AG04450 (cell line): ENCODE measurements at regions of chr3 and their contacts with region 1.

Region 1: DNA sequence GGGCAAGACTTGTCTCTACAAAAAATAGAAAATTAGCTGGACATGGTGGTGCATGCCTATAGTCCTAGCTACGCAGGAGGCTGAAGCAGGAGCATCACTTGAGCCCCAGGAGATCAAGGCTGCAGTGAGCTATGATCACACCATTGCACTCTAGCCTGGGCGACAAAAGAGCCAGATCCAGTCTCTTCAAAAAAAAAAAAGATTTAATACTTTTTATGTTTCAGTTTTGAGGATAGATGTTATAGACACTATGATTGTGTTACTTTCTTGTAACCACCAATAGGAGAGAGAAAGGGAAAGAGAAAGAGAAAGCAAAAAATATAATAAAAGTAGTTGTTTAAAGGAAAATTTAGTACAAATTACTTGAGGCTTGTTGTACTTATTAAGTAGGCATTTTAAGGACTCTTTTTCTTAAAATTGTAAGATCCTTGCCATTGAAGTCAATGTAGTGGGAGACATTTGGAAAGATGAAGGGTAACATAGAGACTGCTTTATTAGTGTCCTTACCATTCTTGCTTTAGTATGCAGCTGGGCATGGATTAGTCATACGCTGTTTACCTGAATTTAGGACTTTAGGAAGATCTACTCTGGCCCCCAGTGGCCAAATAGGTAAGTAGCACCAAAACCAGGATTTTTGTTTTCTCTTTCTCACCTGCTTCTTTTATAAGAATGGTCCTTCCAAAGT is 35.1 kb upstream of the ZDHHC23 start:
- DNase-seq: peak; percentile 32
- H3K4me3 ChIP-seq: no peak overlapping the region
- H3K27ac ChIP-seq: no peak overlapping the region
- H3K27me3 ChIP-seq: no peaks in the 10 kb centered on the region
- CTCF ChIP-seq: peak; percentile 76

Region 2: DNA sequence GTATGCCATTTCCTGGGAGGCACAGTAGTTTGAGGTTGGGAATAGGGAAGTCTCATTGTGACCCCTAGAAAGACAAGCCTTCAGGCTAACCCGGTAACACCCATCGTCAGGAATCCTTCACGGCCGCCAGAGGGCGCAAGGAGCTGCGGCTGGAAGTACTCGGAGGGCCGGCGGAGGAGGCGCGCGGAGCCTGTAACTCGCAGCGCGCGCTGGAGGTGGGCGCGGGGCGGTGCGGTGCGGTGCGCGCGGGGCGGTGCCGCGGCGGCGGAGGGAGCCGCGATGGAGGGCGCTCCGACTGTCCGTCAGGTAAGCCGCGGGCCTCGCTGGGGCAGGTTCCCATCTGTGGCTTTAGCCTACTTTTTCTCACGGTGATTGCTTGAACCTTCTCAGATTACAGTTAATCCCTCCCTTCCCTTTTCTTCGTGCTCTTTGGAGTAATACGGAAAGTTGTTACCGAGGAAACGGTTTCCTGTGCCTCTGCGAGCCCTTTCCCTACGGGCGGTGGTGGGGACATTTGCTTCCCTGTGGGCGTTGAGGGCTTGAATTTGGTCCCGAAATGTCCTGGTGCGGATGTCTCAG is 74.0 kb before region 1 on chr3 and contains the start of gene GRAMD1C:
- CTCF ChIA-PET with region 1: interaction called, 51 read pairs
- POLR2A ChIA-PET with region 1: no interaction called
- DNase-seq: peak; percentile 74
- H3K4me3 ChIP-seq: peak within 1 kb of the TSS; percentile 77
- H3K27ac ChIP-seq: no peak within 1 kb of the TSS
- H3K27me3 ChIP-seq: no peaks in the 10 kb centered on the region
- CTCF ChIP-seq: peak; percentile 86
- polyA plus RNA-seq, gene GRAMD1C: 3.0 and 4.2 TPM in 2 replicates

Region 3: GRCh38 chr3:113885050-113885449 is 27.6 kb before region 1 on chr3:
- CTCF ChIA-PET with region 1: no interaction called
- POLR2A ChIA-PET with region 1: no interaction called
- DNase-seq: no peak
- H3K4me3 ChIP-seq: no peak overlapping the region
- H3K27ac ChIP-seq: no peak overlapping the region
- H3K27me3 ChIP-seq: no peaks in the 10 kb centered on the region
- CTCF ChIP-seq: no peak